ENCODE measurements at regions of chr14 and their contacts with region 1.

Region 1: GRCh38 chr14:78959674-78960264 is 789.6 kb downstream of the NRXN3 start:
- DNase-seq: peak; percentile 43
- H3K4me3 Mint-ChIP-seq: no peak overlapping the region
- H3K27ac Mint-ChIP-seq: no peak overlapping the region
- H3K4me1 Mint-ChIP-seq: no peaks in the 10 kb centered on the region
- H3K27me3 Mint-ChIP-seq: no peaks in the 10 kb centered on the region

Region 2: DNA sequence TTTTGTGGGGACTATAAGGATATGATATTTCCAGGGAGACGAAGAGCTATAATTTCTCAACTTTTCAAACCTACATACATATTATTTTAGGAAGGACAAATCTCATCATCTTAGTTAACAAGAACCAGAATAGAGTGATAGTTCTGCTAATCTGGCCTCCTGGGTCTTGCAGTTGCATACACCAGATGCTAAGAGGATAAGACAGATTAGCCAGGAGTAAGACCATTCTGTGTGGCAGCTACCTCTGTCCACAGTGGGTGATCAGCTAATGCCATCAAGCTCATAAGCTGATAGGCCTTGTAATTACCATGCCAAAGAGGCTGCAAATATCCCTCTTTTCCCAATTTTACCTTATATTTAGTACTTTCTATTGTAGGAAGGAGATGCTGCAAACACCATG is 12.8 kb before region 1 on chr14:
- CTCF ChIA-PET with region 1: interaction called, 10 read pairs
- POLR2A ChIA-PET with region 1: no interaction called
- DNase-seq: no peak
- H3K4me3 Mint-ChIP-seq: no peak overlapping the region
- H3K27ac Mint-ChIP-seq: no peak overlapping the region
- H3K4me1 Mint-ChIP-seq: no peaks in the 10 kb centered on the region
- H3K27me3 Mint-ChIP-seq: no peaks in the 10 kb centered on the region

Region 3: GRCh38 chr14:78970677-78971076 is 10.9 kb after region 1 on chr14:
- CTCF ChIA-PET with region 1: interaction called, 12 read pairs
- POLR2A ChIA-PET with region 1: no interaction called
- DNase-seq: no peak
- H3K4me3 Mint-ChIP-seq: no peak overlapping the region
- H3K27ac Mint-ChIP-seq: no peak overlapping the region
- H3K4me1 Mint-ChIP-seq: no peaks in the 10 kb centered on the region
- H3K27me3 Mint-ChIP-seq: no peaks in the 10 kb centered on the region